ENCODE measurements at regions of chr19 and their contacts with region 1.

Region 1: DNA sequence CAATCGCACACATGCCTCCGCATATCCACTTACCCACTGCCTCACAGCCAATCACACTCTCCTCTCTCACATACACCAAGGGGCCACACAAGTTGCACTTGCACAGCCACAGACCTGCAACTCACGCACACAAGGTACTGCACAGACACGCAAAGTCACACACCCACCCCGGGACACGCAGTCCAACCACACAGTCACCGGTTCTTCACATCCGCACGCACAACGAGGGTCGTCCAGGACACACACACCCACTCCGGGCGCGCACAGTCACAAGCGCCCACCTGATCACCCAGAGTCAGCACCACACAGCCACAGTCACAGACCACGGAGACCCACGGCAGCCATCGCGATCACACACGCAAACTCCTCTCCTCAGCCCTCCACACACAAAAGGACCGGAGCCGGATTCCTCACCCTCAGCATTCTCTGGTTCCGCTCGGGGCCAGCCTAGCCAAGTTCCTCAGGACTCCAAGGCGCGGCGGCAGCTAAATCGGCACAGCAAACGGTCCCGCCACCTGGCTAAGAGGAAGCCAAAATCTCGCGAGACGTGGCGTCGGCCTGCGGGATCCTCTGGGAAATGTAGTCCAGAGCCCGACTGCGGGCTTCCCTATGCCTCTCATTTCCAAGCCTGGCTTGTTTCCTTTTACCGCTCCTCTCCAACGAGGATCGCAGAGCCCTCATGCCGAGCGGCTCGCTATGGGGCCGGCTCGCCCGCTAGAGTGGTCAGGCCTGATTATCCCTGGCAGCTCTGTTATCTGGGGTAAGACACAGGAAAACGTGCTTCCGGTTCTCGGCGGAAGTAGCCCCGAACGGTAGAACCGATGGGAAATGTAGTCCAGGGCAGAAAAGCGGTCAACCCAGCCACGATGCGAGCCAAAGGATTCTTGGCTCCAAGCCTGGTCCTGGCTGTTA is at the start of gene ZNF850:
- DNase-seq: peak; percentile 98
- H3K4me3 Mint-ChIP-seq: peak within 1 kb of the TSS; percentile 95
- H3K27ac Mint-ChIP-seq: peak within 1 kb of the TSS; percentile 89
- H3K4me1 Mint-ChIP-seq: peaks cover 21% of the 10 kb centered on the region
- H3K27me3 Mint-ChIP-seq: no peaks in the 10 kb centered on the region
- total RNA-seq, gene ZNF850: 3.2 and 3.8 TPM in 2 replicates

Region 2: GRCh38 chr19:36378625-36379509 is 393.7 kb before region 1 on chr19 and contains the start of gene ZFP14:
- intact Hi-C with region 1: loop called (anchors 1 kb)
- DNase-seq: peak; percentile 98
- H3K4me3 Mint-ChIP-seq: peak within 1 kb of the TSS; percentile 84
- H3K27ac Mint-ChIP-seq: peak within 1 kb of the TSS; percentile 90
- H3K4me1 Mint-ChIP-seq: peaks cover 14% of the 10 kb centered on the region
- H3K27me3 Mint-ChIP-seq: no peaks in the 10 kb centered on the region
- total RNA-seq, gene ZFP14: 2.2 and 3.2 TPM in 2 replicates

Region 3: GRCh38 chr19:36528194-36528920 is 244.2 kb before region 1 on chr19 and contains the start of gene ZNF260:
- intact Hi-C with region 1: loop called (anchors 1 kb)
- DNase-seq: peak; percentile 97
- H3K4me3 Mint-ChIP-seq: peak within 1 kb of the TSS; percentile 96
- H3K27ac Mint-ChIP-seq: peak within 1 kb of the TSS; percentile 95
- H3K4me1 Mint-ChIP-seq: peaks cover 17% of the 10 kb centered on the region
- H3K27me3 Mint-ChIP-seq: no peaks in the 10 kb centered on the region
- total RNA-seq, gene ZNF260: 6.7 and 8.0 TPM in 2 replicates

Region 4: GRCh38 chr19:36665832-36666231 is 106.7 kb before region 1 on chr19:
- intact Hi-C with region 1: loop called (anchors 1 kb)
- DNase-seq: no peak
- H3K4me3 Mint-ChIP-seq: peak overlapping the region; percentile 98
- H3K27ac Mint-ChIP-seq: peak overlapping the region; percentile 76
- H3K4me1 Mint-ChIP-seq: peaks cover 23% of the 10 kb centered on the region
- H3K27me3 Mint-ChIP-seq: no peaks in the 10 kb centered on the region

Region 5: GRCh38 chr19:36837906-36838783 is 65.6 kb after region 1 on chr19 and contains the start of gene ZNF790:
- intact Hi-C with region 1: loop called (anchors 2 kb)
- DNase-seq: peak; percentile 94
- H3K4me3 Mint-ChIP-seq: no peak within 1 kb of the TSS
- H3K27ac Mint-ChIP-seq: peak within 1 kb of the TSS; percentile 49
- H3K4me1 Mint-ChIP-seq: peaks cover 4% of the 10 kb centered on the region
- H3K27me3 Mint-ChIP-seq: no peaks in the 10 kb centered on the region
- total RNA-seq, gene ZNF790: 5.1 and 6.7 TPM in 2 replicates

Region 6: GRCh38 chr19:36915992-36916830 is 143.6 kb after region 1 on chr19 and contains the starts of genes ZNF568 and ZNF829:
- intact Hi-C with region 1: loop called (anchors 1 kb)
- DNase-seq: peak; percentile 97
- H3K4me3 Mint-ChIP-seq: peak within 1 kb of the TSS; percentile 90
- H3K27ac Mint-ChIP-seq: peak within 1 kb of the TSS; percentile 96
- H3K4me1 Mint-ChIP-seq: peaks cover 19% of the 10 kb centered on the region
- H3K27me3 Mint-ChIP-seq: no peaks in the 10 kb centered on the region
- total RNA-seq, gene ZNF568: 4.4 and 6.1 TPM in 2 replicates
- total RNA-seq, gene ZNF829: 4.8 TPM in 2 replicates

Region 7: GRCh38 chr19:37077934-37078725 is 305.6 kb after region 1 on chr19 and contains the start of gene ZNF420:
- intact Hi-C with region 1: loop called (anchors 1 kb)
- DNase-seq: peak; percentile 96
- H3K4me3 Mint-ChIP-seq: peak within 1 kb of the TSS; percentile 91
- H3K27ac Mint-ChIP-seq: peak within 1 kb of the TSS; percentile 92
- H3K4me1 Mint-ChIP-seq: peaks cover 17% of the 10 kb centered on the region
- H3K27me3 Mint-ChIP-seq: no peaks in the 10 kb centered on the region
- total RNA-seq, gene ZNF420: 9.8 and 11.9 TPM in 2 replicates

Measured in activated CD4-positive, alpha-beta T cell treated with anti-CD3 and anti-CD28 coated beads, Interleukin-2, amount 10 ng/mL, durations not matched to agents 24 days and 14 days (primary cell).